CD8-positive, alpha-beta memory T cell (primary cell): ENCODE measurements at regions of chr6 and their contacts with region 1.

Region 1: DNA sequence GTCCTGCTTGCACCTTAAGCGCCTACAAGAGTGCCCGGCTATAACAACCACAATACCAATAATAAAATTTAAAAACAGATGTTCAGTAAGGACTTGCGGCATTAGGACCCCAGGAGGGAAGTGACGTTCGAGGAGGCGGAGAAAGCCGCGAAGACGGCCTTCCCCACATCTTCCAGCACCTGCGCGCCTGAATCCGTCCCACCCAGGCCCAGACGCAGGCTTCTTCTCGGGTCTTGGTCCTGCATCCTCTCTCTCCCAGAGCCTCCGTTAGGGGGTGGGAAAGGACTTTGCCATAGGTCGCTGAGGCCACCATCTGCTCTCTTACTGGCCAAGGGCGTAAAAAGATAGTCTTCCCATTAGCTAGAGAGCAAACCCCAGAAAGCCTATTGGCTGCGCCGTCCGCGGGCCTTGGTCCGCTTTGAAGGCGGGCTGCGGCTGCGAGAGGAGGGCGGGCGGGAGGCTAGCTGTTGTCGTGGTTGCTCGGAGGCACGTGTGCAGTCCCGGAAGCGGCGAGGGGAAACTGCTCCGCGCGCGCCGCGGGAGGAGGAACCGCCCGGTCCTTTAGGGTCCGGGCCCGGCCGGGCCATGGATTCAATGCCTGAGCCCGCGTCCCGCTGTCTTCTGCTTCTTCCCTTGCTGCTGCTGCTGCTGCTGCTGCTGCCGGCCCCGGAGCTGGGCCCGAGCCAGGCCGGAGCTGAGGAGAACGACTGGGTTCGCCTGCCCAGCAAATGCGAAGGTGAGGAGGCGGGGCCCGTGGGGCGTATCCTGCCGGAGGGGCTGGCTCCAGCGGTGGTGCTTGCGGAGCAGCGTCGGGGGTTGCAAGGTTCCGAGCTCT is at the start of gene CNPY3:
- DNase-seq: peak; percentile 90 to 97 (median 95)
- H3K4me3 ChIP-seq: peak within 1 kb of the TSS; percentile 78
- H3K4me3 Mint-ChIP-seq: peak within 1 kb of the TSS; percentile 97 to 100 (median 99)
- H3K27ac ChIP-seq: peak within 1 kb of the TSS; percentile 91
- H3K27ac Mint-ChIP-seq: peak within 1 kb of the TSS; percentile 97 to 100 (median 99)
- H3K4me1 ChIP-seq: peaks cover 45% of the 10 kb centered on the region
- H3K4me1 Mint-ChIP-seq: peaks cover 46 to 51% (median 50%) of the 10 kb centered on the region in 3 donors
- H3K27me3 ChIP-seq: no peaks in the 10 kb centered on the region
- H3K27me3 Mint-ChIP-seq: peaks cover 0 to 2% of the 10 kb centered on the region in 2 donors
- total RNA-seq, gene CNPY3: 53.1 to 55.8 TPM

Region 2: GRCh38 chr6:42978839-42979522 is 49.8 kb after region 1 on chr6 and contains the start of gene PEX6:
- CTCF ChIA-PET with region 1: interaction called, 17 read pairs
- POLR2A ChIA-PET with region 1: interaction called, 50 read pairs
- DNase-seq: peak; percentile 90 to 97 (median 94)
- H3K4me3 ChIP-seq: peak within 1 kb of the TSS; percentile 80
- H3K4me3 Mint-ChIP-seq: peak within 1 kb of the TSS; percentile 87 to 96 (median 94)
- H3K27ac ChIP-seq: peak within 1 kb of the TSS; percentile 79
- H3K27ac Mint-ChIP-seq: peak within 1 kb of the TSS; percentile 94 to 99 (median 97)
- H3K4me1 ChIP-seq: peaks cover 47% of the 10 kb centered on the region
- H3K4me1 Mint-ChIP-seq: peaks cover 36 to 61% (median 50%) of the 10 kb centered on the region in 3 donors
- H3K27me3 ChIP-seq: no peaks in the 10 kb centered on the region
- H3K27me3 Mint-ChIP-seq: no peaks in the 10 kb centered on the region
- total RNA-seq, gene PEX6: 19.2 to 20.6 TPM

Region 3: GRCh38 chr6:43013843-43014433 is 84.7 kb after region 1 on chr6 and contains the starts of genes KLHDC3 and MEA1:
- CTCF ChIA-PET with region 1: interaction called, 3 read pairs
- POLR2A ChIA-PET with region 1: interaction called, 24 read pairs
- DNase-seq: peak; percentile 97 to 100 (median 99)
- H3K4me3 ChIP-seq: peak within 1 kb of the TSS; percentile 81
- H3K4me3 Mint-ChIP-seq: peak within 1 kb of the TSS; percentile 86 to 96 (median 90)
- H3K27ac ChIP-seq: peak within 1 kb of the TSS; percentile 81
- H3K27ac Mint-ChIP-seq: peak within 1 kb of the TSS; percentile 59 to 97 (median 92)
- H3K4me1 ChIP-seq: peaks cover 42% of the 10 kb centered on the region
- H3K4me1 Mint-ChIP-seq: peaks cover 48 to 70% (median 54%) of the 10 kb centered on the region in 3 donors
- H3K27me3 ChIP-seq: no peaks in the 10 kb centered on the region
- H3K27me3 Mint-ChIP-seq: peaks cover 0 to 2% of the 10 kb centered on the region in 2 donors
- total RNA-seq, gene KLHDC3: 73.5 to 74.1 TPM
- total RNA-seq, gene MEA1: 102 to 108 TPM

Region 4: GRCh38 chr6:43053545-43054205 is 124.5 kb after region 1 on chr6 and contains the start of gene CUL7:
- CTCF ChIA-PET with region 1: no interaction called
- POLR2A ChIA-PET with region 1: interaction called, 19 read pairs
- DNase-seq: peak; percentile 85 to 93 (median 89)
- H3K4me3 ChIP-seq: peak within 1 kb of the TSS; percentile 55
- H3K4me3 Mint-ChIP-seq: peak within 1 kb of the TSS; percentile 89 to 97 (median 92)
- H3K27ac ChIP-seq: peak within 1 kb of the TSS; percentile 88
- H3K27ac Mint-ChIP-seq: peak within 1 kb of the TSS; percentile 93 to 100 (median 96)
- H3K4me1 ChIP-seq: peaks cover 27% of the 10 kb centered on the region
- H3K4me1 Mint-ChIP-seq: peaks cover 36 to 56% (median 55%) of the 10 kb centered on the region in 3 donors
- H3K27me3 ChIP-seq: no peaks in the 10 kb centered on the region
- H3K27me3 Mint-ChIP-seq: peaks cover 0 to 2% of the 10 kb centered on the region in 2 donors
- total RNA-seq, gene CUL7: 11.7 to 12.1 TPM